A673 (cell line): ENCODE measurements at regions of chr4 and their contacts with region 1.

Region 1: DNA sequence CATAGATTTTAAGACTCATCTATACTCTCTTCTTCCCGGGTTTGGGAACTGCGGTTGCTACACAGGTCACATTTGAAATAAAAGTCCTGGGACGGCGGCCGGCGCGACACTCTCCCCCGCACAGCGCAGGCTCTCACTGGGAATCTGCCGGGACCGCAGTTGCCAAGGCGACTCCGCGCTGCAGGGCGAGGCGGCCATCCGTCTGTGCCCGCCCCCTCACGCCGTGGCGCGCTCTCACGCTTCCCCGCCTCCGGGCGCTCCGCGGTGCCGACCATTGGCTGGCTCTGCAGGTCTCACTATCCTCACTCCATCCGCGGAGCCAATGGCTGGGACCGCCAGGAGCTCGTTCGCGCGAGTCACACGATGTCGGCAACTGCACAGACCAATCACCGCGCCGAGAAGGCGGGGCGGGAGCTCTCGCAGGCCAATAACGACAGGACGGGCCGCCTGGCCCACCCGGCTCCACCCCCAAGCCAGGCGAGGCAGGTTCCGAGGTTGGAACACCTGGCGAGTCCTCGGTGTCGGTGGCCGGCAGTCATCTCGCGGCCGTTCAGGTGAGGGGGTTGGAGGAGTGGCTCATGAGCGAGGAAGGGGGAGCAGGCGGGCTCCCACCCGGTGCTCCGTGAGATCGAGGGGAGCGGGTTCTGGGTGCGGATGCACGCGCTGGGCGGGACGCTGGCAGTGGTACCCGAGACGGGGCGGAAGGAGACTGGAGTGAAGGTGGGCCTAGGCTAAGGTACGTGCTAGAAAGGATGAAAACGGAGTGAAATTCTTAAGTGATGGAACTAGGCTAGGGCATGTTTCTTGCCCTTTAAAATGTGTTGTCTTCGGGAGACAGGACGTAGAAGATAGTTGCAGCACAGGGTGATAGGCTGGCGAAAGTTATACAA is at the start of gene MSMO1:
- DNase-seq: peak; percentile 100
- H3K4me3 ChIP-seq: peak within 1 kb of the TSS; percentile 71
- H3K27ac ChIP-seq: peak within 1 kb of the TSS; percentile 75
- H3K4me1 ChIP-seq: peaks cover 15% of the 10 kb centered on the region
- H3K27me3 ChIP-seq: no peaks in the 10 kb centered on the region
- CTCF ChIP-seq: no peak
- total RNA-seq, gene MSMO1: 104 and 137 TPM in 2 replicates

Region 2: GRCh38 chr4:165207431-165208220 is 119.8 kb before region 1 on chr4 and contains the start of gene KLHL2:
- CTCF ChIA-PET with region 1: no interaction called
- POLR2A ChIA-PET with region 1: no interaction called
- intact Hi-C with region 1: loop called (anchors 1 kb)
- DNase-seq: peak; percentile 80
- H3K4me3 ChIP-seq: peak within 1 kb of the TSS; percentile 89
- H3K27ac ChIP-seq: peak within 1 kb of the TSS; percentile 76
- H3K4me1 ChIP-seq: peaks cover 19% of the 10 kb centered on the region
- H3K27me3 ChIP-seq: no peaks in the 10 kb centered on the region
- CTCF ChIP-seq: no peak
- total RNA-seq, gene KLHL2: 22.5 and 23.7 TPM in 2 replicates

Region 3: DNA sequence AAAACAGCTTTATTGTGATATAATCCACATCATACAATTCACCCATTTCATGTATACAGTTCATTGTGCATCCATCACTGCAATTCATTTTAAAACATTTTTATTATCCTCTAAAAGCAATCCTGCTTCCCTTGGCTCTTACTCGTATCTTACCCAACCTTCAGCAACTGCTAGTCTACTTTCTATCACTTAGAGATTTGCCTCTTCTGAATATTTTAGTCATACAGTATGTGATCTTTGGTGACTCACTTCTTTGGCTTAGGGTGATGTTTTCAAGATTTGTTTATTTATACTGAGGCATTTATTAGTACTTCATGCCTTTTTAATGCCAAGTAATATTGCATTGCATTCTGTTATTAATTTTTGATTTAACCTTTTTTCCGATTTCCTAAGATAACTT is 14.9 kb before region 1 on chr4:
- CTCF ChIA-PET with region 1: no interaction called
- POLR2A ChIA-PET with region 1: no interaction called
- intact Hi-C with region 1: no loop called
- DNase-seq: no peak
- H3K4me3 ChIP-seq: no peak overlapping the region
- H3K27ac ChIP-seq: no peak overlapping the region
- H3K4me1 ChIP-seq: no peaks in the 10 kb centered on the region
- H3K27me3 ChIP-seq: no peaks in the 10 kb centered on the region
- CTCF ChIP-seq: no peak